GM10248 (cell line): ENCODE measurements at regions of chr2 and their contacts with region 1.

Region 1: DNA sequence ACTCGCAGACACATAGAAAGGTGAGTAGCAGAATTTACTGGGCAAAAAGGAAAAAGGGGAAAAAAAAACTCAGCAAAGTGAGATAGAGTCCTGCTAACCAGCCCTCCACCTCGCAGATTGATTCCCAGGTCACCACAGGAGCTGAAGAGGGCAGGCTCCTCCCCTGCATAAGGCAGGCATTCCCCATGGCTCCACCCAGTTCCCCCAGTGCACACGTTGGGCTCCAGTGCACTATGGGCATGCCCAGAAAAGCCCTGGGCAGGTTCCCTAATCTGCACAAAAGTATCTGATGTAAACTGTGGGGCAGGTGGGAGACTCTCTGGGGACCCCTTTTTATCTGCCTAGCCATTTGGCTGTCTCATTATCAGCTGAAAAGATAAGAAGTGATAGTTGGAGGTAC is 461.2 kb upstream of the TMEFF2 start:
- DNase-seq: no peak
- CTCF ChIP-seq: no peak

Region 2: GRCh38 chr2:192604295-192604694 is 51.6 kb before region 1 on chr2:
- CTCF ChIA-PET with region 1: no interaction called
- POLR2A ChIA-PET with region 1: no interaction called
- DNase-seq: no peak
- CTCF ChIP-seq: no peak

Region 3: GRCh38 chr2:192634557-192634956 is 21.4 kb before region 1 on chr2:
- CTCF ChIA-PET with region 1: no interaction called
- POLR2A ChIA-PET with region 1: no interaction called
- DNase-seq: no peak
- CTCF ChIP-seq: no peak

Region 4: DNA sequence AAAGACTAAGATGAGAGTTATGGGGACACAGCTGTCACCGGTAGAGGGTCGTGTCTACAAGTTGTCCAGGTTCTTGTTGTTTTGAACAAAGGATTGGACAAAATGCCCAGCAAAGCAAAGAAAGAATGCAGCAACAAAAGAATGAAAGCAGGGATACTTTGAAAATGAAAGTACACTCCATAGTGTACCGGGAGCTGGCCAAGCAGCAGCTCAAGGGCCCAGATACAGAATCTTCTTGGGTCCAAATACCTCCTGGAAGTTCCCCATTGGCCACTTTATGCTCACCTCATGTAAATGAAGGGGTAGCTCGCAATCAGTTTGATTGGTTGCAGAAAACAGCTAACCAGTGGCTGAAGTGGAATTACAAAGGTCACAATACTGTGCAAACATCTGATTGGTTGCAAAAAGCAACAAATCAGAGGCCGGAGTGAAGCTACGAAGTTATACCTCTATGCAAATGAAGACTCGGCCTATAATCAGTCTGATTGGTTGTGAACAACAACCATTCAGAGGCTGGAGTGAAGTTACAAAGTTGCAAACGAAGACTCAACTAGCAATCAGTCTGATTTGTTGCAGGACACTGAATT is 13.7 kb after region 1 on chr2:
- CTCF ChIA-PET with region 1: interaction called, 10 read pairs
- POLR2A ChIA-PET with region 1: no interaction called
- DNase-seq: no peak
- CTCF ChIP-seq: no peak